SK-N-SH (cell line): ENCODE measurements at regions of chr17 and their contacts with region 1.

Region 1: GRCh38 chr17:51371732-51372151 is 111.4 kb downstream of the UTP18 start:
- DNase-seq: peak; percentile 85
- H3K4me3 ChIP-seq: peak overlapping the region in 1 of 2 experiments; percentile 10; a peak in 1 of 4 replicates
- H3K27ac ChIP-seq: peak overlapping the region in 1 of 2 experiments; percentile 4; a peak in 1 of 4 replicates
- H3K4me1 ChIP-seq: peaks cover 0 to 16% of the 10 kb centered on the region in 2 experiments; a peak in 1 of 4 replicates
- H3K27me3 ChIP-seq: no peaks in the 10 kb centered on the region
- CTCF ChIP-seq: peak; percentile 57
- EP300 ChIP-seq: no peak
- RAD21 ChIP-seq: peak; percentile 100

Region 2: DNA sequence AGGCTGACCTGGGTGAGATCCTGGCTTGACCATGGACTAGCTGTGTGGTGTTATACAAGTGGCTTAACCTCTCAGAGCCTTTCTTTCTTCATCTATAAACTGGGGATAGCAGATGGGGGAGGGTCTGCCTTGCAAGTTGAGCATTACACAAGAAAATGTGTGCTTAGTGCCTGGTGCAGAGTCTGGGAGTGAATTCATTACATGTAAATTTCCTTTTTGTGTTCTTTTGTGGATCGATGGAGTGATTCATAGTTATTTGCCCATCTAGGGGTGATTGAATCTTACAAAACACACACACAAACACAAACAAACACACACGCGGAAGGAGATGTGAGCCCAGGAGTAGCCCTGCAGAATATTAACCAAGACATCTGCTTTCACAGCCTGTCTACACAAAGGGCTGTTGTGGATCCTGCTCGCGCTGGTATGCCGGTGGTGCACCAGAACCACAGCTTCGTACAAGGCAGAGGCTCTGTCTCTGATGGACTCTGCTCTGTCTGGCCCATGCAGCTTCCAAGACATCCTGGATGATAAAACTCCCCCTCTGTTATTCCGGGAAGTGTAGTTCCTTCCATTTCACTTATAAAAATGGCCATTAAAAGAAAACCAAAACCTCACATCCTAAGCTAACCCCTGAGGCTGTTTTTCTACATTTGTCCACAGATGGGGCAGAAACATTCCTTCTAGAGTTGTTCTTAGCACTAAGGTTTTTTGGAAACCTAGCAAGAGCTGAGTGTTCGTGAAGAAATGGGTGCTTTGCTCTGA is 25.3 kb before region 1 on chr17:
- CTCF ChIA-PET with region 1: interaction called, 13 read pairs
- POLR2A ChIA-PET with region 1: no interaction called
- DNase-seq: no peak
- H3K4me3 ChIP-seq: no peak overlapping the region
- H3K27ac ChIP-seq: no peak overlapping the region
- H3K4me1 ChIP-seq: peaks cover 0 to 3% of the 10 kb centered on the region in 2 experiments; a peak in 1 of 4 replicates
- H3K27me3 ChIP-seq: no peaks in the 10 kb centered on the region
- CTCF ChIP-seq: no peak
- EP300 ChIP-seq: no peak
- RAD21 ChIP-seq: no peak

Region 3: DNA sequence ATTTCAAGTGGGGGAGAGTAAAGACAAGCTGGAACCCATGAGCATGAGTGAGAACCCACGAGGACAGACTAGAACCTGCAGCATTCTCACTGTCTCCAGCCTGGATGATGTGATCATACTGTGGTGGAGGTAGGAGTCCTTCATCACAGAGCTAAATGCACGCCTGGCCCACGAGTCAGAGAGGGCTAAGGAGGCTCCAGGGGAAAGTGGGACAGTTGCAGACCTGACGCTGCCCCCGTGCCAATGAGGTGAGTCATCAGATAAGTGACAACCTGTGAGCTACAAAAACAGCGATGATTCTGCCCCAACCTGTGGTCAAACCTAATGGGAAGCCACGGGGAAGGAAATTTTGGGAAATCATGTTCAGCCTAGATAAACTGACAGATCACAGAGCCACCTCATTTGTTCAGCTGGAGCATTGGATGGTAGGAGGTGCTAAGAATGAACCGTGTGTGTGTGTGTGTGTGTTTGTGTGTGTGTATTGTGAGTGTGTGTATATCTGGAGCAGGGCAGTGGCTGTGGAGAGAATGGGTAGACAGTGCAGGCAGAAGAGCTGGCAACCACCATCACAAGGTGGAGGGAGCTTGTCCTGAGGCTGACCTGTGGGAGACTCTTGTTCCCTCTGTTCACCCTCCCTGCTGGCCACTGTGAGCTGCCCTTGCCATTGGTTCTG is 20.4 kb after region 1 on chr17:
- CTCF ChIA-PET with region 1: interaction called, 38 read pairs
- POLR2A ChIA-PET with region 1: no interaction called
- DNase-seq: no peak
- H3K4me3 ChIP-seq: no peak overlapping the region
- H3K27ac ChIP-seq: no peak overlapping the region
- H3K4me1 ChIP-seq: no peaks in the 10 kb centered on the region
- H3K27me3 ChIP-seq: no peaks in the 10 kb centered on the region
- CTCF ChIP-seq: no peak
- EP300 ChIP-seq: no peak
- RAD21 ChIP-seq: no peak

Region 4: GRCh38 chr17:51479303-51479702 is 107.6 kb after region 1 on chr17:
- CTCF ChIA-PET with region 1: interaction called, 10 read pairs
- POLR2A ChIA-PET with region 1: no interaction called
- DNase-seq: no peak
- H3K4me3 ChIP-seq: no peak overlapping the region
- H3K27ac ChIP-seq: no peak overlapping the region
- H3K4me1 ChIP-seq: peaks cover 0 to 12% of the 10 kb centered on the region in 2 experiments; a peak in 2 of 4 replicates
- H3K27me3 ChIP-seq: no peaks in the 10 kb centered on the region
- CTCF ChIP-seq: no peak
- EP300 ChIP-seq: no peak
- RAD21 ChIP-seq: no peak

Region 5: GRCh38 chr17:51540151-51540550 is 168.4 kb after region 1 on chr17:
- CTCF ChIA-PET with region 1: interaction called, 64 read pairs
- POLR2A ChIA-PET with region 1: no interaction called
- DNase-seq: no peak
- H3K4me3 ChIP-seq: no peak overlapping the region
- H3K27ac ChIP-seq: no peak overlapping the region
- H3K4me1 ChIP-seq: no peaks in the 10 kb centered on the region
- H3K27me3 ChIP-seq: no peaks in the 10 kb centered on the region
- CTCF ChIP-seq: no peak
- EP300 ChIP-seq: no peak
- RAD21 ChIP-seq: peak; percentile 42; the same call in 1 of the 2 replicates